T-cell (primary cell): ENCODE measurements at regions of chr6 and their contacts with region 1.

Region 1: GRCh38 chr6:85400331-85400730 is 49.6 kb upstream of the NT5E start:
- DNase-seq: no peak
- ATAC-seq: no peak
- H3K4me3 ChIP-seq: no peak overlapping the region
- H3K4me3 Mint-ChIP-seq: no peak overlapping the region
- H3K27ac ChIP-seq: no peak overlapping the region
- H3K27ac Mint-ChIP-seq: no peak overlapping the region
- H3K4me1 ChIP-seq: peaks cover 0 to 13% of the 10 kb centered on the region in 2 experiments
- H3K4me1 Mint-ChIP-seq: peaks cover 19 to 48% (median 26%) of the 10 kb centered on the region in 3 donors
- H3K27me3 ChIP-seq: no peaks in the 10 kb centered on the region
- H3K27me3 Mint-ChIP-seq: no peaks in the 10 kb centered on the region

Region 2: DNA sequence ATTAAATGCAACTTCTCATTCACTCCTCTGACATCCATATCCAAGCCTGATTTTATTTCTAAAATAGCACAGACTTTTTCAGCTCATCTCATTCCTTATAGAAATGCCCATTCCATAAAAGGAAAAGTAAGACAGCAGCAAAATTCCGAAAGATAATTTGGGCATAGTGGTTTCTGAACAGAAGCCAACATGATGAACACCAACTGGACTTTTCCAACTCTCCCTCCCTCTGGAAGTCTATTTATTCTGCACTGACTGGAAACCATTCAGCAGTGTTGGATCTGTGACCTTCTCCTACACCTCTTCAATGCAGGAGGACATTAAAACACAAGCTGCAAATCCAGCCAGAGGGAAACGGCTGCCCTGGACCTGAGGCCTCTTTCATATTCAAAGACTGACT is 256.7 kb before region 1 on chr6:
- CTCF ChIA-PET with region 1: no interaction called
- POLR2A ChIA-PET with region 1: no interaction called
- DNase-seq: no peak
- ATAC-seq: no peak
- H3K4me3 ChIP-seq: no peak overlapping the region
- H3K4me3 Mint-ChIP-seq: no peak overlapping the region
- H3K27ac ChIP-seq: no peak overlapping the region
- H3K27ac Mint-ChIP-seq: no peak overlapping the region
- H3K4me1 ChIP-seq: no peaks in the 10 kb centered on the region
- H3K4me1 Mint-ChIP-seq: no peaks in the 10 kb centered on the region
- H3K27me3 ChIP-seq: no peaks in the 10 kb centered on the region
- H3K27me3 Mint-ChIP-seq: no peaks in the 10 kb centered on the region

Region 3: GRCh38 chr6:85273870-85274269 is 126.5 kb before region 1 on chr6:
- CTCF ChIA-PET with region 1: no interaction called
- POLR2A ChIA-PET with region 1: no interaction called
- DNase-seq: no peak
- ATAC-seq: no peak
- H3K4me3 ChIP-seq: no peak overlapping the region
- H3K4me3 Mint-ChIP-seq: no peak overlapping the region
- H3K27ac ChIP-seq: no peak overlapping the region
- H3K27ac Mint-ChIP-seq: no peak overlapping the region
- H3K4me1 ChIP-seq: no peaks in the 10 kb centered on the region
- H3K4me1 Mint-ChIP-seq: no peaks in the 10 kb centered on the region
- H3K27me3 ChIP-seq: no peaks in the 10 kb centered on the region
- H3K27me3 Mint-ChIP-seq: no peaks in the 10 kb centered on the region

Region 4: GRCh38 chr6:85493389-85493788 is 93.1 kb after region 1 on chr6:
- CTCF ChIA-PET with region 1: interaction called in 1 of 2 experiments, 10 read pairs
- POLR2A ChIA-PET with region 1: no interaction called
- DNase-seq: no peak
- ATAC-seq: no peak
- H3K4me3 ChIP-seq: no peak overlapping the region
- H3K4me3 Mint-ChIP-seq: no peak overlapping the region
- H3K27ac ChIP-seq: no peak overlapping the region
- H3K27ac Mint-ChIP-seq: no peak overlapping the region
- H3K4me1 ChIP-seq: no peaks in the 10 kb centered on the region
- H3K4me1 Mint-ChIP-seq: no peaks in the 10 kb centered on the region
- H3K27me3 ChIP-seq: no peaks in the 10 kb centered on the region
- H3K27me3 Mint-ChIP-seq: no peaks in the 10 kb centered on the region